ENCODE measurements at regions of chr19 and their contacts with region 1.

Region 1: DNA sequence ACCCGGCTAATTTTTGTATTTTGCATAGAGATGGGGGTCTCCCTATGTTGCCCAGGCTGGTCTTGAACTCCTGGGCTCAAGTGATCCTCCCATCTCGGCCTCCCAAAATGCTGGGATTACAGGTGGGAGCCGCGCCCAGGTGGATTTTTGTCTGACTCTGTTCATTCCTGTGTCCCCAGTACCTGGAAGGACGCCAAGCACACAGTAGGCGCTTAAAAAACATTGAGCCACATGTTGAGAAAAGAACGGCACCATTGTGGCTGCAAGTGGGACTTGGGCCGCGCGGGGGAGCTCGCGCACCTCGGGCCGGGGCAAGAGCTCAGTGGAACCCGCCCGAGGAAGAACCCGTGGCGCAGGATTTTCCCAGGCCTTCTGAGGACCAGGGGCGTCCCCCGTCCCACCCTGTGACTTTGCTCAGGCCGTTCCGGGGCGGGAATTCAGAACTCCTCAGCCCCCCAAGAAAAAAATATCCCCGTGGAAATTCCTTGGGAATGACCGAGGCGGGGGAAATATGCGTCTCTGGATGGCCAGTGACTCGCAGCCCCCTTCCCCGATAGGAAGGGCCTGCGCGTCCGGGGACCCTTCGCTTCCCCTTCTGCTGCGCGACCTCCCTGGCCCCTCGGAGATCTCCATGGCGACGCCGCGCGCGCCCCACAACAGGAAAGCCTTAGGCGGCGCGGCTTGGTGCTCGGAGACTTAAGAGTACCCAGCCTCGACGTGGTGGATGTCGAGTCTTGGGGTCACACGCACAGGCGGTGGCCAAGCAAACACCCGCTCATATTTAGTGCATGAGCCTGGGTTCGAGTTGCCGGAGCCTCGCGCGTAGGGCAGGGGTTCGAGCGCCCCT is 1.4 kb upstream of the ICAM1 start:
- DNase-seq: peak; percentile 89 to 91
- ATAC-seq: peak; percentile 74 to 91 (median 88)
- H3K4me3 ChIP-seq: peak overlapping the region; percentile 12 to 78 (median 58)
- H3K27ac ChIP-seq: peak overlapping the region; percentile 87 to 99 (median 91)
- H3K4me1 ChIP-seq: peaks cover 7 to 70% (median 46%) of the 10 kb centered on the region in 9 donors
- H3K27me3 ChIP-seq: peaks cover 0 to 19% (median 3%) of the 10 kb centered on the region in 7 donors
- CTCF ChIP-seq: peak; percentile 94 to 99 (median 97)

Region 2: DNA sequence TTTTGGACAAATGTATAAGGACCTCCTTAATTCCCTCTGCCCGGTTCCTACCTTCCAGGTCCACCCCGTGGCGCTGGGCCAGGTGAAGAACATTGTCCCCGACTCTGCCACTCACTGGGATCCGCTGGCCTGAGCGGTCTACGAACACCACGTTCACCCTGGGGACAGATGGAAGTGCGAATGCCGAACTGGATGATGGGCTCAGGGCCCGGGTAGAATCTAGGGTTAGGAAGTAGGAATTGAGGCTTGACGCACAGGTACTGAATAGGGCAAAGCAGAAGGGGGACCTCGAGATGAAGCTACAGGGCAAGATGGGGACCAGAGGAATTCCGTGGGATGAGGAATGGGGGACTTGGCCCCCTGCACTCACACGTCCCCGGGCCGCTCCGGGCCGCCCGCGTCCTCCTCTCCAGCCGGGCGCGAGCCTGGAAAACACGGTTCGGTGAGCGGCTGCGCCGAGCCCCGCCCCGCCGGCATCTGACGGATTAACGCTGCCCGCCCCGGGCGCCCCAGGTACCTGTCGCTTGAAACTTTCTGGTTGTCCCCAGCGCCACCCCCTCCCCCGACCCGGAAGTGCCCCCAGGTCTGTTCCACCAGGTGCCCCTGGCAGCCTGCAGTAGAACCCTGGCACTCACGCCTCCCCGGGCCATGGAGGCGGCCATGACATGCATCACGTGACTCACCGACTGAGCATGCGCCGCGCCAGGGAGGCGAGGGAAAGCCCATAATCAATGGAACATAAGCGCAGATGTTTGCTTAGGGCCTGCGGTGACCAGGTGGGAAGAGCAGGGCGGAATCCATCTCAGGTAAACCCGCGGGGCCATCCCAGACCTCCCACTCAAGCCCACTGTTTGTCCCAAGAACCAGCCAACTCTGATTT is 46.0 kb after region 1 on chr19 and contains the start of gene FDX2:
- intact Hi-C with region 1: loop called in 1 of 10 experiments (anchors 5 kb)
- DNase-seq: peak; percentile 88 to 92
- ATAC-seq: peak; percentile 88 to 97 (median 94)
- H3K4me3 ChIP-seq: peak within 1 kb of the TSS; percentile 61 to 98 (median 90)
- H3K27ac ChIP-seq: peak within 1 kb of the TSS in 9 of 10 donors; percentile 30 to 81 (median 66)
- H3K4me1 ChIP-seq: peaks cover 4 to 22% (median 17%) of the 10 kb centered on the region in 9 donors
- H3K27me3 ChIP-seq: no peaks in the 10 kb centered on the region
- CTCF ChIP-seq: no peak
- total RNA-seq, gene FDX2: 11.7 to 21.8 (median 17.1) TPM

Region 3: GRCh38 chr19:10388957-10389356 is 119.4 kb after region 1 on chr19:
- intact Hi-C with region 1: loop called (anchors 1 to 2 kb)
- DNase-seq: peak; percentile 87 to 92
- ATAC-seq: peak; percentile 46 to 76 (median 70)
- H3K4me3 ChIP-seq: no peak overlapping the region
- H3K27ac ChIP-seq: no peak overlapping the region
- H3K4me1 ChIP-seq: peaks cover 0 to 28% (median 5%) of the 10 kb centered on the region in 9 donors
- H3K27me3 ChIP-seq: no peaks in the 10 kb centered on the region
- CTCF ChIP-seq: peak; percentile 90 to 96 (median 94)